Heart right ventricle (tissue), 16 donors: ENCODE measurements at regions of chr1 and their contacts with region 1.

Region 1: GRCh38 chr1:176374967-176375569 is 87.9 kb upstream of the PAPPA2 start:
- DNase-seq: peak; percentile 66
- ATAC-seq: peak in 6 of 8 donors; percentile 63 to 70 (median 66)
- H3K4me3 ChIP-seq: no peak overlapping the region
- H3K27ac ChIP-seq: no peak overlapping the region
- H3K4me1 ChIP-seq: peaks cover 0 to 4% (median 0%) of the 10 kb centered on the region in 9 donors
- H3K27me3 ChIP-seq: no peaks in the 10 kb centered on the region
- CTCF ChIP-seq: peak; percentile 56 to 88 (median 84)

Region 2: DNA sequence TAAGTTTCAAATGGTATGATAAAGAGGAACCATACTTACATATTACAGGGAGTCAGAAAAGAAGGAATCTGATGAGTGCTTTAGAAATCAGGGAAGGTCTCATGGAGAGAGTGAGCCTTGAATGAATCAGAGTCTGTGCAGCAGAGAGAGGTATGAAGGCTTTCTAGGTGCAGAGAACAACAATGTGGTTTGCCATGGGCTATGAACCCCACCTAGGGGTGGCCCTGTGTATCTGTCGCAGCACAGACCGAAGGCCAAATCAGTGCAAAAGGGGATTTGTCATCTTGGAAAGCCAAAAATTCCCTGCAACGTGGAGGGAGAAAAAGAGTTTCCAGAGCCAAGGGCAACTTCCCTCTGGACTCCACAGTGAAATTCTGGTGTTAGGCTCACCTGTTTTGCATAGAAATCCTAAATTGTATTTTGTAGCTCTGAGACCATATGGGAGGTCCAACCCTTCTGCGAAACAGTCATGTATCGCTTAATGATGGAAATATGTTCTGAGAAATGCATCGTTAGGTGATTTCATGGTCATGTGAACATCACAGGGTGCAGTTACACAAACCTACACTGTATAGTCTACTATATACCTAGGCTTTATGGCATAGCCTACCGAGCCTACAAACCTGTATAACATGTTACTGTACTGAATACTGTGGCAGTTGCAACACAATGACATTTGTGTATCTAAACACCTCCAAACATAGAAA is 91.6 kb after region 1 on chr1:
- intact Hi-C with region 1: loop called in 2 of 10 experiments (anchors 5 to 10 kb)
- DNase-seq: no peak
- ATAC-seq: peak in 2 of 8 donors; percentile 39 to 46
- H3K4me3 ChIP-seq: no peak overlapping the region
- H3K27ac ChIP-seq: no peak overlapping the region
- H3K4me1 ChIP-seq: no peaks in the 10 kb centered on the region
- H3K27me3 ChIP-seq: no peaks in the 10 kb centered on the region
- CTCF ChIP-seq: peak in 7 of 9 donors; percentile 20 to 31 (median 23)

Region 3: GRCh38 chr1:176559878-176560277 is 184.8 kb after region 1 on chr1:
- intact Hi-C with region 1: loop called in 8 of 10 experiments (anchors 5 to 10 kb)
- DNase-seq: peak in 1 of 2 donors; percentile 62
- ATAC-seq: peak; percentile 79 to 96 (median 92)
- H3K4me3 ChIP-seq: no peak overlapping the region
- H3K27ac ChIP-seq: no peak overlapping the region
- H3K4me1 ChIP-seq: peaks cover 0 to 11% (median 2%) of the 10 kb centered on the region in 9 donors
- H3K27me3 ChIP-seq: peaks cover 0 to 14% (median 5%) of the 10 kb centered on the region in 7 donors
- CTCF ChIP-seq: peak; percentile 69 to 92 (median 85)

Region 4: GRCh38 chr1:176837708-176838107 is 462.6 kb after region 1 on chr1:
- intact Hi-C with region 1: loop called in 6 of 10 experiments (anchors 2 to 10 kb)
- DNase-seq: no peak
- ATAC-seq: no peak
- H3K4me3 ChIP-seq: no peak overlapping the region
- H3K27ac ChIP-seq: no peak overlapping the region
- H3K4me1 ChIP-seq: peaks cover 0 to 10% (median 0%) of the 10 kb centered on the region in 9 donors
- H3K27me3 ChIP-seq: no peaks in the 10 kb centered on the region
- CTCF ChIP-seq: no peak

Region 5: GRCh38 chr1:176843352-176844297 is 468.6 kb after region 1 on chr1:
- intact Hi-C with region 1: loop called in 9 of 10 experiments (anchors 1 to 10 kb)
- DNase-seq: peak in 1 of 2 donors; percentile 19
- ATAC-seq: peak in 7 of 8 donors; percentile 40 to 72 (median 54)
- H3K4me3 ChIP-seq: no peak overlapping the region
- H3K27ac ChIP-seq: no peak overlapping the region
- H3K4me1 ChIP-seq: peaks cover 0 to 37% (median 5%) of the 10 kb centered on the region in 9 donors
- H3K27me3 ChIP-seq: no peaks in the 10 kb centered on the region
- CTCF ChIP-seq: peak; percentile 26 to 74 (median 61)

Region 6: GRCh38 chr1:176880954-176881595 is 506.0 kb after region 1 on chr1:
- intact Hi-C with region 1: loop called in 9 of 10 experiments (anchors 2 to 10 kb)
- DNase-seq: peak; percentile 60 to 68
- ATAC-seq: peak; percentile 40 to 91 (median 82)
- H3K4me3 ChIP-seq: no peak overlapping the region
- H3K27ac ChIP-seq: no peak overlapping the region
- H3K4me1 ChIP-seq: peaks cover 0 to 6% (median 0%) of the 10 kb centered on the region in 9 donors
- H3K27me3 ChIP-seq: no peaks in the 10 kb centered on the region
- CTCF ChIP-seq: peak; percentile 67 to 87 (median 84)